Activated naive CD4-positive, alpha-beta T cell treated with anti-CD3 and anti-CD28 coated beads for 36 hours (primary cell): ENCODE measurements at regions of chr16 and their contacts with region 1.

Region 1: GRCh38 chr16:89363621-89364393 is 126.6 kb downstream of the ANKRD11 start:
- DNase-seq: peak; percentile 69
- H3K4me3 Mint-ChIP-seq: no peak overlapping the region
- H3K27ac Mint-ChIP-seq: peak overlapping the region; percentile 50
- H3K4me1 Mint-ChIP-seq: peaks cover 95% of the 10 kb centered on the region
- H3K27me3 Mint-ChIP-seq: no peaks in the 10 kb centered on the region

Region 2: DNA sequence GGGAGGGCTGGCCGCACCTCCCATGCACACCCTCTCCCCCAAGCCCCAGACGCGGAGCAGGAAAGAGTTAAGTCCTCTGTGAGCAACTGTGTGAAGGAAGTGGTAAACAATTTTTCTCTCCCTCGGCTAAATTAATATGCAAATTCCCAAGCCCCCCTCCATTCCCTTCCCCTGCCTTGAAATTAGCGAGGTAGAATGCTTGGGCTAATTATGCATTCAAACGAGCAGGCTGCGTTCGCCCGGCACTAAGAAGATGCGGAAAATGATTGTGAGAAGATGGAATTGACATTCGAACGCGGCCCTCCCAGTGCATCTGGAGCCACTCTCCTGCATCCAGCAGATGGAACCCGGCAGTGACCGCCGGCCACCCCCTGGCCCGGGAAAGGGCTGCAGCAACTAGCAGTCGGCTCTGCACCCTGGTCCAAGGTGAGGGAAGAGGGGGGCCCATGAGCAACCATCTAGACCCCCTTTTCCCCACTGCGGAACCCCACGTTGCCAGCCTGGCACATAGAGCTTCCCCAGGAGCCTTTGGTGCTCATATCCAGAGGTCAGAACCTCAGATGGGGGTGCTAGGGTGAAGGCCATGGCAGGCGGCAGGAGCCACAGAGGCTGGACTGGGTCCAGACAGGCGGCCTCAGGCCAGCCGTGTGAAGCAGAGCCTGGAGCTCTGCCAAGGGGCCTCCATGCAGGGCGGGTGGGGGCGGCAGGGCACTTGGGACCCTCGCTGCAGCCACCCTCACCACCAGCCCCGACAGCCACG is 319.2 kb before region 1 on chr16:
- CTCF ChIA-PET with region 1: no interaction called
- intact Hi-C with region 1: no loop called
- DNase-seq: no peak
- H3K4me3 Mint-ChIP-seq: no peak overlapping the region
- H3K27ac Mint-ChIP-seq: no peak overlapping the region
- H3K4me1 Mint-ChIP-seq: no peaks in the 10 kb centered on the region
- H3K27me3 Mint-ChIP-seq: no peaks in the 10 kb centered on the region

Region 3: DNA sequence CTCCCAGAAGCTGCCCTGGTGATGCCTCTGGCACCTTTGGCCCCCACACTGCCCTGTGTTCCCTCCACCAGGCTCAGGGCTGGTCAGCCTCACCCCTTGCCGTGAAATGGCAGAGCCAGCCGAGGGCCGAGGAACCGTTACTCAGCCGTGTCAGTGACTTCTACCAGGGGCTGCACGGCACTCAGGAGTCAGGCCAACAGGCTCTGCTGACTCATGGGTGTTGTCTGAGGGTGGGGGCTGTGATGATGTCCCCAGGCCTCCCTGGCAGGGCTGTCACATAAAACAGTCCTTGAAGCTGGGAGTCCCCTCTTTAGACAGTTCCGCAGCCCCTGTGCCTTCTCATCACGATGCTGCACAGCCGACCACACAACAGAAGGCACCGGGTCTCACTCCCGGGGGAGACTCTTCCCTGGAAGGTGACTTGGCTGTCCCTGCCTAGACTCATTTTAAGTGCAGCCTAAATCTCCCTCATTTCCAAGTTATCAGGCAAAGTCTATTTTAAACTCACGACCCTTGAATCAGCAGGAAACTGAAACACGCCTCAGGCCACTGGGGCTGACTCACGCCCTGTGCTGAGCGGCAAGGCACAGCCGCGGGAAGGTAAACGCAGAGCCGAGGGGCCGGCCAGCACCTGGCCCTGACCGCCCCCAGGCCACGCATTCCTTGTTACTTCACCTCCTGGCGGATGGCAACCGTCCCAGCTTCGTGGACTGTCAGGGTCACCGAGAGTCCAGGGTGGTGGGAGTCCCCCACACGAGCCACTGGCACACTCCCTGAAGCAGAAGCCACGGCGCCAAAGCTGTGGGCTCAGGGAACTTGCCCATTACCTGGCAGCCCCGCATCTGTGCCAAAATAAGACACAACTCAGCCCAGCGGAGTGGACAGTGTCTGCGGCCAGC is 43.7 kb before region 1 on chr16:
- CTCF ChIA-PET with region 1: no interaction called
- intact Hi-C with region 1: loop called (anchors 2 kb)
- DNase-seq: peak; percentile 50
- H3K4me3 Mint-ChIP-seq: no peak overlapping the region
- H3K27ac Mint-ChIP-seq: peak overlapping the region; percentile 28
- H3K4me1 Mint-ChIP-seq: peaks cover 98% of the 10 kb centered on the region
- H3K27me3 Mint-ChIP-seq: no peaks in the 10 kb centered on the region

Region 4: DNA sequence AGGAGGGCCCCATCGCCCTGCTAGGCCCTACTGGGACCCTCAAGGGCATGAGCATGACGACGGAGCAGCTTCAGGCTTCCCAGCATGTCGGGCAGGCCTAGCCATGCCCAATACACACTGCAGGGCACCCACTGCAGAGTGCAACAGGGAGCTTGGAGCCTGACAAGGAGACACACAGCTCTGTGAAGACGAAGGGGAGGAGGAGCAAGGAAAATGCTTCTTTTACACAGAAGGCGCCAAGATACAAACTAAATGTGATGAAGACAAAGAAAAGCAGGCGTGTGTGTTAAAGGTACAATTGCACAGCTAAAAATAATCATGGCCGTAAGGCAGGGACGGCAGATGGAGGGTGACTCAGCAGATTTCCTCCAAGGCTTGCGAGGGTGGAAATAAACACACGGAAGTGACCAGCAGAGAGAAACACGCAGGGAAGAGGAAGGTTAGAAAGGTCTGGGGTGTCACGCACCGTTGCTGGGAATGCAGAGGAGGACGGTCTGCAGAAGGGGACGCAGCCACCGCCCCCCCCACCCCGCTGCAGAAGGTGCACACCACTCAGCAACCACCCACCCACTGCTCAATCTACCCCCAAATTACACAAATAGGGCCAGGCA is 37.8 kb before region 1 on chr16:
- CTCF ChIA-PET with region 1: no interaction called
- intact Hi-C with region 1: loop called (anchors 2 kb)
- DNase-seq: peak; percentile 44
- H3K4me3 Mint-ChIP-seq: no peak overlapping the region
- H3K27ac Mint-ChIP-seq: peak overlapping the region; percentile 46
- H3K4me1 Mint-ChIP-seq: peaks cover 89% of the 10 kb centered on the region
- H3K27me3 Mint-ChIP-seq: no peaks in the 10 kb centered on the region

Region 5: GRCh38 chr16:89350701-89351380 is 13.0 kb before region 1 on chr16:
- CTCF ChIA-PET with region 1: interaction called, 4 read pairs
- intact Hi-C with region 1: loop called (anchors 1 kb)
- DNase-seq: peak; percentile 57
- H3K4me3 Mint-ChIP-seq: no peak overlapping the region
- H3K27ac Mint-ChIP-seq: peak overlapping the region; percentile 57
- H3K4me1 Mint-ChIP-seq: peaks cover 94% of the 10 kb centered on the region
- H3K27me3 Mint-ChIP-seq: no peaks in the 10 kb centered on the region

Region 6: DNA sequence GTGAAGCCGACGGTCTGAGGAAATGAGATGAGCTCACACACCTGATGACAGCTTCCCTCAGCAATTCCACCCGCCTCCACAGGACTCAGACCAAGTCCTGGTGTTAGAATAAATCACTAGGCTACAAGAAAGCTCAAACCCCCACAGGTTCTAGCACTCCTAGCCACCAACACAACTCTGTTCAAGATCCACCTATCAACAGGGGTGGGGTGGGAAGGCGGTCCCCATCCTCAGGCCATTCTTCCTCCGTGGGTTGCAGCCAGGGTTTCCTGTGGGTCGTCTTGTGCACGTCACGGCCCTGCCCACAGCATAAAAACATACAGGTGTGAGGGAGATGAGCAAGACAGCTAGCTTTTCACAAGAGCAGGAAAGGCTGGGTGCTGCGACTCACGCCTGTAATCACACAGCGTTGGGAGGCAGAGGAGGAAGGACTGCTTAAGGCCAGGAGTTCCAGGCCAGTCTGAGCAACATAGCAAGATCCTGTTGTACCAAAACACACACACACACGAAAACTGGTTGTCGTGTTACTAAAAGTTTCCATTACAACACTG is 45.4 kb after region 1 on chr16:
- CTCF ChIA-PET with region 1: no interaction called
- intact Hi-C with region 1: loop called (anchors 5 kb)
- DNase-seq: peak; percentile 70
- H3K4me3 Mint-ChIP-seq: peak overlapping the region; percentile 21
- H3K27ac Mint-ChIP-seq: peak overlapping the region; percentile 84
- H3K4me1 Mint-ChIP-seq: peaks cover 89% of the 10 kb centered on the region
- H3K27me3 Mint-ChIP-seq: no peaks in the 10 kb centered on the region

Region 7: DNA sequence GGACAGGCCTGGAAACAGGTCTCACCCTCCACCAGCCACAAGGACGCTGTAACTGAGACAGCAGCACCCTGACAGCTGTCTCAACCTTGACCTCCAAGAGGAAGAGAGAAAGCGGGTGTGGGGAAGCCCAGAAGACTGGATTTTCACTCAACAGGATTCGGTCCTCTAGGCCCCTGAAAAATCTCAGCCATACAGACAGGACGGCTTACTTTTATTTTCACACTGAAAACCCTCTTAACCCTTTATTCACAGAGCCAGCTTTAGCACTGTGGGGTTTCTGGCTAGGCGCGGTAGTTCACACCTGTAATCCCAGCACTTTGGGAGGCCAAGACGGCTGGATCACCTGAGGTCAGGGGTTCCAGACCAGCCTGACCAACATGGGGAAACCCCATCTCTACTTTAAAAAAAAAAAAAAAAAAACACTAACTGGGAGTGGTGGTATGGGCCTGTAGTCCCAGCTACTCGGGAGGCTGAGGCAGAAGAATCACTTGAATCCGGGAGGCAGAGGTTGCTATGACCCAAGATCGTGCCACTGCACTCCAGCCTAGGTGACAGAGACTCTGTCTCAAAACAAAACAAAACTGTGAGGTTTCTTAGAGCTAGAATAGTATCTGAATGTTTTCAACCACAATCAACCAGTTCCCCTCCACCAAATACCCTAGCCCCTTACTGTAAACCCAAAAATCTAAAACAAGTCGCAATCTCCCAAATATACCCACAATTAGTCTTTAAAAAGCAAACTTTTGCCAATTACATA is 121.3 kb after region 1 on chr16:
- CTCF ChIA-PET with region 1: no interaction called
- intact Hi-C with region 1: loop called (anchors 1 kb)
- DNase-seq: peak; percentile 68
- H3K4me3 Mint-ChIP-seq: peak overlapping the region; percentile 57
- H3K27ac Mint-ChIP-seq: peak overlapping the region; percentile 96
- H3K4me1 Mint-ChIP-seq: peaks cover 84% of the 10 kb centered on the region
- H3K27me3 Mint-ChIP-seq: no peaks in the 10 kb centered on the region

Region 8: DNA sequence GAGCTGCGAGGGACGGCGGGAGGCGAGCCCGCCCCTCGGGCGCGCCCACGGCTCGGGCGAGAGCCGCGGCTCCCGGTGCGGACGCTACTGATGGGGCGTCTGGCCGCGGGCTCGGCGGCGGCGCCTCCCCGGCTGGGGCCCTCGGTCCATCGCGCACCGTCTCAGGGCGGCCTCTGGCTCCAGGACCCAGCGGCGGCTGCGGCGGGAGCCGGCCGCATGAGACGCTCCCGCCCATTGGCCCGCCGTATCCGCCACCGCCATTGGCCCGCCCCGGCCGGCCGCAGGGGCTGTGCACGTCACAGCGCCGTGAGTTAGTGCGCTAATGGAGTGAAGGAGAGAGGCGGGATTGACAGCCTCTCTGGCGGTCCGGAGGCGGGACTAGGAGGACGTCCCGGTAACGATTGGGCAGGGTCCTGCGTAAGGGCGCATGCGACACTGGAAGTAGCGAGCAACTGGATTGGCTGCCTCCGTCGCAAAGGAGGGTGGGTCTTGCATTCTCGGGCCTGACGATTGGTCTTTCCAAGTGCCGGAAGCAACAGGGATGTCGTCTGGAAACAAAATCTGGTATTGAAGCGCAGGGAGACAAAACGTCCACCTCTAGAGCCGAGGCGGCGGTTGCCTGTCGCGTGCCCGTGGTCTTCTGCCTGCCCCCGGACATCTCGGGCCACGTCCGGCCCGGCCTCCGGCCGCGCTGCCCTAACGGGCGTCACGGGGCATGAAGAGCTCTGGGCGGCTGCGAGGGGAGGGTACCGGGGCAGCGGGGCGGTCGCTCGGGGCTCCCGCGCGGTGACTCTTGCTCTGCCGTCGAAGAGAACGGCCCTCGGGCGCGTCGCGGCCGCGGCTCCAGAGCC is 126.8 kb after region 1 on chr16 and contains the start of gene ANKRD11:
- CTCF ChIA-PET with region 1: no interaction called
- intact Hi-C with region 1: loop called (anchors 1 kb)
- DNase-seq: peak; percentile 99
- H3K4me3 Mint-ChIP-seq: peak within 1 kb of the TSS; percentile 96
- H3K27ac Mint-ChIP-seq: peak within 1 kb of the TSS; percentile 98
- H3K4me1 Mint-ChIP-seq: peaks cover 50% of the 10 kb centered on the region
- H3K27me3 Mint-ChIP-seq: no peaks in the 10 kb centered on the region
- total RNA-seq, gene ANKRD11: 174 to 177 TPM

Region 9: DNA sequence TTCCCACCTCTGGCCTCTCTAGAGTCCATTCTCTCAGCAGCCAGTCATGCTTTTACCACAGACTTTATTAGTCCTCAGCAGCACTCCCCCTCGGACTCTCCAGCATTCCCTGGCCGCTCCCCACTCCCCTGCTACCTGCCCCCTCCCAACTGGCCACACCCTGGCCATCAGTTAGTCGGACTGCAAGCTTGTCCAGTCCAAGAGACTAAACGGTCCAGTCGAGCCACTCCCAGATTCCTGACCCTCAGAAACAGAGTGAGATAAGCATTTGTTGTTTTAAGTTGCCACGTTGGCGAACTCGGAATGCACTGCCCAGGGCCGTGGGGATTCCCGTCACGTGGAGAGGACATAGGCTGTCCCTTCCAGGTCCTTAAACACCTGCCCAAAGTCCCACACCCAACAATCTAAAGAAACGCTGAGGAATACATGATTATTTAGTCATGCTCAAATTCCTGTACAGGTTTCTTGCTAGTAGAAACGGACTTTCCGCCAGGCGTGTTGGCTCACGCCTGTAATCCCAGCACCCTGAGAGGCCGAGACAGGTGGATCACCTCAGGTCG is 138.6 kb after region 1 on chr16:
- CTCF ChIA-PET with region 1: no interaction called
- intact Hi-C with region 1: no loop called
- DNase-seq: no peak
- H3K4me3 Mint-ChIP-seq: no peak overlapping the region
- H3K27ac Mint-ChIP-seq: no peak overlapping the region
- H3K4me1 Mint-ChIP-seq: peaks cover 22% of the 10 kb centered on the region
- H3K27me3 Mint-ChIP-seq: no peaks in the 10 kb centered on the region